Tibial artery (tissue), 4 donors: ENCODE measurements at regions of chr6 and their contacts with region 1.

Region 1: GRCh38 chr6:48098923-48099322 is 12.1 kb downstream of the PTCHD4 start:
- DNase-seq: no peak
- H3K4me3 ChIP-seq: no peak overlapping the region
- H3K27ac ChIP-seq: no peak overlapping the region
- H3K4me1 ChIP-seq: no peaks in the 10 kb centered on the region
- H3K27me3 ChIP-seq: no peaks in the 10 kb centered on the region
- CTCF ChIP-seq: no peak

Region 2: DNA sequence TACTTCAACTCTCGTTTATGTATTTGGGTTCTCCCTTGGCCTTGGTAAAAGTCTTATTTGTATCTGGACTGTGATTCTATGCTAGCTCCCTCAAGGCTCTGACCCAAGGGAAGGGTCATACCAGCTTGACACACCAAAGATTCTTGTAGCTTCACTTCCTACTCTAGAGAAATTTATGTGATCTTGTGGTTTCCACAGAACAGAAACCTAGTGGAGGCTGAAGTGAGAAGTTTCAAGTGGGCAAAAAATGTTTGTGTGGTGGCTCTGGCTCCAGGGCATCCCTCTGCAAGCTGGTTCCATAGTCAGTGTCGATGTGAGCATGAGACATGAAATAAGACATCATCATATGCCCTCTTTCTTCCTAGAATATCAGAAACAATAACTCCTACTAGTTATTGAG is 741.1 kb before region 1 on chr6:
- intact Hi-C with region 1: no loop called
- DNase-seq: no peak
- H3K4me3 ChIP-seq: no peak overlapping the region
- H3K27ac ChIP-seq: no peak overlapping the region
- H3K4me1 ChIP-seq: no peaks in the 10 kb centered on the region
- H3K27me3 ChIP-seq: no peaks in the 10 kb centered on the region
- CTCF ChIP-seq: no peak

Region 3: DNA sequence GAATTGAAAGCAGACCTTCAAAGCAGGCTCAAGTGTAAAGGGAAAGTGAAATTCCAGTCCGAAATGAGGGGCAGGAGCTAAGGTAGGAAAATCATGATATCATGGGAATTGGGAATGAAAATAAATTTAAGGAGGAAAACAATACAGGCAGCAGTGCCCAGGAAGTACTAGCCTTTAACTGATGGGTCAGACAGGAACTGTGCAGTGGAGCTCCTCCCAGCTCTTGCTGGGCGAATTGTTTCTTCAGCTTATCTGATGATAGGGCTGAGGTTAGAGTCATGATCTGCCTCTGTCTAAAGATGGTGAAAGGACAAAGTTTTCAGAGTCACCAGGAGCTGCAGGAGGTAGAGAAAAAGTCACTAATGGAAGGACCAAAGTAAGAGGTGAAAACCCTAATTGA is 469.9 kb after region 1 on chr6:
- intact Hi-C with region 1: no loop called
- DNase-seq: no peak
- H3K4me3 ChIP-seq: no peak overlapping the region
- H3K27ac ChIP-seq: no peak overlapping the region
- H3K4me1 ChIP-seq: no peaks in the 10 kb centered on the region
- H3K27me3 ChIP-seq: no peaks in the 10 kb centered on the region
- CTCF ChIP-seq: no peak

Region 4: GRCh38 chr6:48658915-48659314 is 560.0 kb after region 1 on chr6:
- intact Hi-C with region 1: loop called (anchors 5 kb)
- DNase-seq: no peak
- H3K4me3 ChIP-seq: no peak overlapping the region
- H3K27ac ChIP-seq: no peak overlapping the region
- H3K4me1 ChIP-seq: no peaks in the 10 kb centered on the region
- H3K27me3 ChIP-seq: no peaks in the 10 kb centered on the region
- CTCF ChIP-seq: no peak